Common myeloid progenitor, CD34-positive (primary cell): ENCODE measurements at regions of chr1 and their contacts with region 1.

Region 1: GRCh38 chr1:231606707-231607106 is 19.9 kb upstream of the DISC1 start:
- DNase-seq: no peak
- H3K4me3 ChIP-seq: no peak overlapping the region
- H3K27ac ChIP-seq: no peak overlapping the region
- H3K4me1 ChIP-seq: peaks cover 3 to 31% (median 14%) of the 10 kb centered on the region in 4 experiments
- H3K27me3 ChIP-seq: no peaks in the 10 kb centered on the region

Region 2: GRCh38 chr1:231590453-231591198 is 16.1 kb before region 1 on chr1:
- CTCF ChIA-PET with region 1: interaction called, 13 read pairs
- POLR2A ChIA-PET with region 1: no interaction called
- DNase-seq: peak; percentile 67 to 80 (median 77)
- H3K4me3 ChIP-seq: no peak overlapping the region
- H3K27ac ChIP-seq: no peak overlapping the region
- H3K4me1 ChIP-seq: peaks cover 0 to 4% (median 0%) of the 10 kb centered on the region in 4 experiments
- H3K27me3 ChIP-seq: no peaks in the 10 kb centered on the region

Region 3: DNA sequence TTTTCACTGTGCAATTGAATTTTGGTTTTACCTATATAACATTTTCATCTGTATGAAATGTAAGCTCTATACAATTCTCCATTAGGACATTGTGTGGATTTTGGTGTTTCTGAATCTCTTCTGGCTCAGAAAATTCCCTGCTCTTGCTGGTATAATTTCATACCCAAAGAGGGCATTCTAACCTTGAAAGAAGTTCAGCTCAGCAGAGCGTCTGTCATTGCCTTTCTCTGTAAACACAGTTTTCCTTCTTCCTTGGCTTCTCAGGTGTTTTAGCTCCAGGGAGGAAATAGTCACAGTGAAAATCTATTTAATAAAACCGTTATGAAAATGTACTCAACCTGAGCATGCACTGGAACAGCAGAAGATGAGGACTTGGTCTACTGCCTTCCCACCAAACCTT is 35.9 kb after region 1 on chr1:
- CTCF ChIA-PET with region 1: no interaction called
- POLR2A ChIA-PET with region 1: no interaction called
- DNase-seq: no peak
- H3K4me3 ChIP-seq: no peak overlapping the region
- H3K27ac ChIP-seq: peak overlapping the region in 1 of 2 experiments; percentile 12
- H3K4me1 ChIP-seq: peaks cover 0 to 5% (median 2%) of the 10 kb centered on the region in 4 experiments
- H3K27me3 ChIP-seq: no peaks in the 10 kb centered on the region